CD4-positive, alpha-beta memory T cell (primary cell): ENCODE measurements at regions of chr3 and their contacts with region 1.

Region 1: DNA sequence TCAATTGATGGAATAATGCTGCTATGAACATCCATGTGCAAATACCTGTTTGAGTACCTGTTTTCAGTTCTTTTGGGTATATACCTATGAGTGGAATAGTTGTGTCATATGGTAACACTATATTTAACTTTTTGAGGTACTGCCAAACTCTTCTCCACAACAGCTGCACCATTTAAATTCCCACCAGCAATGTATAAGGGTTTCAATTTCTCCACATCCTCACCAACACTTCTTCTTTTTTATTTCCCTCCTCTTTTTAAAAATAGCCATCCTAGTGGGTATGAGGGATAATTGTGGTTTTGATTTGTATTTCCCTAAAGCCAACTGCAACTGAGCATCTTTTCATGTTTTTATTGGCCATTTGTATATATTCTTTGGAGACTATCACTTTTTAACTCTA is 31.3 kb upstream of the ARHGEF3 start:
- DNase-seq: no peak
- H3K4me3 ChIP-seq: no peak overlapping the region
- H3K4me3 Mint-ChIP-seq: no peak overlapping the region
- H3K27ac ChIP-seq: no peak overlapping the region
- H3K27ac Mint-ChIP-seq: no peak overlapping the region
- H3K4me1 ChIP-seq: no peaks in the 10 kb centered on the region
- H3K4me1 Mint-ChIP-seq: peaks cover 26 to 45% (median 36%) of the 10 kb centered on the region in 4 donors
- H3K27me3 ChIP-seq: no peaks in the 10 kb centered on the region
- H3K27me3 Mint-ChIP-seq: no peaks in the 10 kb centered on the region

Region 2: GRCh38 chr3:56819016-56819809 is 13.8 kb before region 1 on chr3:
- CTCF ChIA-PET with region 1: interaction called, 17 read pairs
- POLR2A ChIA-PET with region 1: no interaction called
- intact Hi-C with region 1: loop called (anchors 2 kb)
- DNase-seq: no peak
- H3K4me3 ChIP-seq: no peak overlapping the region
- H3K4me3 Mint-ChIP-seq: no peak overlapping the region
- H3K27ac ChIP-seq: no peak overlapping the region
- H3K27ac Mint-ChIP-seq: peak overlapping the region in 6 of 7 donors; percentile 6 to 90 (median 83)
- H3K4me1 ChIP-seq: peaks cover 60% of the 10 kb centered on the region
- H3K4me1 Mint-ChIP-seq: peaks cover 60 to 90% (median 68%) of the 10 kb centered on the region in 4 donors
- H3K27me3 ChIP-seq: no peaks in the 10 kb centered on the region
- H3K27me3 Mint-ChIP-seq: no peaks in the 10 kb centered on the region

Region 3: GRCh38 chr3:56862352-56863074 is 29.5 kb after region 1 on chr3:
- CTCF ChIA-PET with region 1: no interaction called
- POLR2A ChIA-PET with region 1: no interaction called
- intact Hi-C with region 1: no loop called
- DNase-seq: no peak
- H3K4me3 ChIP-seq: no peak overlapping the region
- H3K4me3 Mint-ChIP-seq: peak overlapping the region in 6 of 8 donors; percentile 27 to 53 (median 34)
- H3K27ac ChIP-seq: no peak overlapping the region
- H3K27ac Mint-ChIP-seq: peak overlapping the region; percentile 27 to 84 (median 72)
- H3K4me1 ChIP-seq: peaks cover 60% of the 10 kb centered on the region
- H3K4me1 Mint-ChIP-seq: peaks cover 57 to 88% (median 70%) of the 10 kb centered on the region in 4 donors
- H3K27me3 ChIP-seq: no peaks in the 10 kb centered on the region
- H3K27me3 Mint-ChIP-seq: no peaks in the 10 kb centered on the region

Region 4: DNA sequence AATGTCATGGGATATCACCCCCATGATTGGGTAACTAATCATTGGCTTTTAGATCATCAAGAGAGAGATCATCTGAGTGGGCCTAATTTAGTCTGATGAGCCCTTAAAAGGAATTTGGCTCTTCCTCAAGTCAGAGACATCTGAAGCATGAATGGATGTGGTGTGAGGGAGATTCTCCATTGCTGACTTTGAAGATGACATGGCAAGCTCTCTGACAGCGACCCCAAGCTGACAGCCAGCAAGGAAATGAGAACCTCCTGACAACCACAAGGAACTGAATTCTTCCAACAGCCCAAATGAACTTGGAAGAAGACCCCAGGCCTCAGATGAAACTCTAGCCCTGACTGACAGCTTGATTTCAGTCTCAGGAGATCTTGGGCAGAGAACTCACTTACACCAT is 119.0 kb after region 1 on chr3:
- CTCF ChIA-PET with region 1: no interaction called
- POLR2A ChIA-PET with region 1: no interaction called
- intact Hi-C with region 1: no loop called
- DNase-seq: no peak
- H3K4me3 ChIP-seq: no peak overlapping the region
- H3K4me3 Mint-ChIP-seq: no peak overlapping the region
- H3K27ac ChIP-seq: no peak overlapping the region
- H3K27ac Mint-ChIP-seq: no peak overlapping the region
- H3K4me1 ChIP-seq: no peaks in the 10 kb centered on the region
- H3K4me1 Mint-ChIP-seq: no peaks in the 10 kb centered on the region
- H3K27me3 ChIP-seq: no peaks in the 10 kb centered on the region
- H3K27me3 Mint-ChIP-seq: no peaks in the 10 kb centered on the region

Region 5: DNA sequence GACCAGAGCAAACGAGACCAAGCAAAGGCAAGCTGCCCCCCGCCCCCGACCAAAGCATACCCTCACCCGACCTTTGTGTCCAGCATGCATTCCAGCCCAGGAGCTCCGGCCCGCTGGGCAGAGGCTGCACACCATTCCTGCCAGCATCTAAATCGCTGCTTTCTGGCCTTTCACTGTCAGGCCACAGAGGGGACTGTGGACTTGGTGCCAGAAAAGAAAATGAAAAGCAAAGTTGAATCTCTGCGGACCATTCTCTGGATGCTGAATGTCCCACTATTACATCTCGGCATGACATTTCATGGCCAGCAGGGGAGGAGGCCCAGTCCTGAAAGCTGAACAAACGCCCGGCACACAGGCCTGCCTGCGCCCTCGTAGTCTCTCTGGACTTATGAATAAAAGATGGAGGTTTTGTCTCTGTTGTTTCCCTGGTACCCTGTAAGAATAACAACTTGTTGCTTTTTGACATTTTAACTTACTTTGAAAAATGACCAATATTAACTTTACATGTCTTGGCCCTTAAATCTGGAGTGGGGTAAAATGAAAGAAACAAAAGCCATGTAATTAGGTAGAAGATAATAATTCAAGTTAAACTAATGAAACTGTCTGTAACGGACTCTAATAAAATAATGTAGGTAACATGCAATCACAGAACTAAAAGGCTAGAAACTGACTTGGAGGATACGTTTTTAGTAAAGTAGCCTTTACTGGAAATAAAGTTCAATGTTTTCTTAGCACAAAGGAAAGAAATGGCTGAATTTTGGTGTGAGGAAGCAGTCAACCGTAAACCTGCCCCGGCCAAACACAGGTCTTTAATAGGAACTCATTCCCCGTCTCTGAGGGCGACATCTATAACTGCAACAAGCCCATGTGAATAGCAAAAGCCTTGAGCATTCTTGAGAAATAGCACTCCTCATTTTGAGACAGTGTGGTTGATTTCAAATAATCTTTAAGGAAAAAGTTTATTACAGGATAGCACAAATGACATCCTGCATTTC is 319.4 kb after region 1 on chr3:
- CTCF ChIA-PET with region 1: no interaction called
- POLR2A ChIA-PET with region 1: no interaction called
- intact Hi-C with region 1: no loop called
- DNase-seq: no peak
- H3K4me3 ChIP-seq: no peak overlapping the region
- H3K4me3 Mint-ChIP-seq: no peak overlapping the region
- H3K27ac ChIP-seq: no peak overlapping the region
- H3K27ac Mint-ChIP-seq: no peak overlapping the region
- H3K4me1 ChIP-seq: no peaks in the 10 kb centered on the region
- H3K4me1 Mint-ChIP-seq: no peaks in the 10 kb centered on the region
- H3K27me3 ChIP-seq: no peaks in the 10 kb centered on the region
- H3K27me3 Mint-ChIP-seq: peaks cover 9 to 20% of the 10 kb centered on the region in 2 donors